Heart right ventricle (tissue), 16 donors: ENCODE measurements at regions of chr6 and their contacts with region 1.

Region 1: GRCh38 chr6:157314705-157315321 is 8.5 kb downstream of the TMEM242 start:
- DNase-seq: no peak
- ATAC-seq: peak in 7 of 8 donors; percentile 56 to 85 (median 69)
- H3K4me3 ChIP-seq: no peak overlapping the region
- H3K27ac ChIP-seq: peak overlapping the region in 3 of 10 donors; percentile 13 to 46 (median 26)
- H3K4me1 ChIP-seq: peaks cover 0 to 37% (median 24%) of the 10 kb centered on the region in 9 donors
- H3K27me3 ChIP-seq: no peaks in the 10 kb centered on the region
- CTCF ChIP-seq: peak; percentile 56 to 97 (median 85)

Region 2: GRCh38 chr6:157264701-157265100 is 50.1 kb before region 1 on chr6:
- intact Hi-C with region 1: no loop called
- DNase-seq: no peak
- ATAC-seq: no peak
- H3K4me3 ChIP-seq: no peak overlapping the region
- H3K27ac ChIP-seq: no peak overlapping the region
- H3K4me1 ChIP-seq: peaks cover 8 to 46% (median 34%) of the 10 kb centered on the region in 9 donors
- H3K27me3 ChIP-seq: no peaks in the 10 kb centered on the region
- CTCF ChIP-seq: no peak

Region 3: DNA sequence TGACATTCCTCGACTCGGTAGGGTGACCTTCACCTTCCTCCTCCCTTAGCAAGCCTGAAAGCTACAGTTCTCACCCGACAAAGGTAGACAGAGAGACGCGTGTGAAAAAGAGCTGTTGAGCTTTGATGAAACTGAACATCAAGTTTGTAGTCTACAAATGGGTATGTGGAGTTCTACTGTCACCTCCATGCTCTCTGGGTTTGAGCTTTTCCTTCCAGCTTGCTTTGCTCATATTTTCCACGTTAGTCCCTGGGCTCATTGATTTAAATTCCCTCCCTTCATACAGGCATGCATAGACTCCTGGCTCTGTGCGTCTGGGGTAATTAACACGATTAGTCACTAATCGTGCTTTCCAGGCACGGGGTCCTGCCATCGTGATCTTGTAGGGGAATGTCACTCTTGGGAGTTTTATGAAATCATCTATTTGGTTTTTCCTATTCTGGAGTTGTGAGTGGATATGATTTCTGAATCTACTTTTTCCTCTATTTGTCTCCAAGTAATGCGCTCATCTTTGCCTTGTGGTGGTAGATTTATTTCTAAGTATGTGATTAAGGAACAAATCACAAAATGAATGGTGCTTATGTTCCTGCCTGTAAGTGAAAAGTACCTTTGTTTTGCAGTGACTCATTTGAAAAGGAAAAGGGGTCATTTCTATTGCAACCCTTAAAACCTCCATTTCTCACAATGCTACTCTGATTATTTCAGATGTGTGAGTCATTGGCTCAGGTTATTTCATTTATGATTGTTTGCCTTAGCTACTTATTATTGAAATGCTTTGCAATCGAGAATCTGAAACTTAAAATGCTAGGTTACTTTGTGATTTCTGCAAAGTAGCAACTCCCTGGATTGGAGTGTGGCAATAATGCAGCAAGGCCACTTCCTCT is 220.8 kb after region 1 on chr6:
- intact Hi-C with region 1: loop called in 1 of 10 experiments (anchors 5 kb)
- DNase-seq: no peak
- ATAC-seq: peak in 3 of 8 donors; percentile 19 to 41 (median 39)
- H3K4me3 ChIP-seq: no peak overlapping the region
- H3K27ac ChIP-seq: peak overlapping the region in 3 of 10 donors; percentile 5 to 62 (median 56)
- H3K4me1 ChIP-seq: peaks cover 0 to 53% (median 44%) of the 10 kb centered on the region in 9 donors
- H3K27me3 ChIP-seq: no peaks in the 10 kb centered on the region
- CTCF ChIP-seq: no peak

Region 4: GRCh38 chr6:157597446-157598312 is 282.9 kb after region 1 on chr6:
- intact Hi-C with region 1: loop called in 9 of 10 experiments (anchors 2 to 10 kb)
- DNase-seq: peak; percentile 37 to 49
- ATAC-seq: peak; percentile 47 to 72 (median 64)
- H3K4me3 ChIP-seq: no peak overlapping the region
- H3K27ac ChIP-seq: peak overlapping the region in 1 of 10 donors; percentile 15
- H3K4me1 ChIP-seq: peaks cover 0 to 9% (median 3%) of the 10 kb centered on the region in 9 donors
- H3K27me3 ChIP-seq: no peaks in the 10 kb centered on the region
- CTCF ChIP-seq: peak in 8 of 9 donors; percentile 44 to 71 (median 57)

Region 5: DNA sequence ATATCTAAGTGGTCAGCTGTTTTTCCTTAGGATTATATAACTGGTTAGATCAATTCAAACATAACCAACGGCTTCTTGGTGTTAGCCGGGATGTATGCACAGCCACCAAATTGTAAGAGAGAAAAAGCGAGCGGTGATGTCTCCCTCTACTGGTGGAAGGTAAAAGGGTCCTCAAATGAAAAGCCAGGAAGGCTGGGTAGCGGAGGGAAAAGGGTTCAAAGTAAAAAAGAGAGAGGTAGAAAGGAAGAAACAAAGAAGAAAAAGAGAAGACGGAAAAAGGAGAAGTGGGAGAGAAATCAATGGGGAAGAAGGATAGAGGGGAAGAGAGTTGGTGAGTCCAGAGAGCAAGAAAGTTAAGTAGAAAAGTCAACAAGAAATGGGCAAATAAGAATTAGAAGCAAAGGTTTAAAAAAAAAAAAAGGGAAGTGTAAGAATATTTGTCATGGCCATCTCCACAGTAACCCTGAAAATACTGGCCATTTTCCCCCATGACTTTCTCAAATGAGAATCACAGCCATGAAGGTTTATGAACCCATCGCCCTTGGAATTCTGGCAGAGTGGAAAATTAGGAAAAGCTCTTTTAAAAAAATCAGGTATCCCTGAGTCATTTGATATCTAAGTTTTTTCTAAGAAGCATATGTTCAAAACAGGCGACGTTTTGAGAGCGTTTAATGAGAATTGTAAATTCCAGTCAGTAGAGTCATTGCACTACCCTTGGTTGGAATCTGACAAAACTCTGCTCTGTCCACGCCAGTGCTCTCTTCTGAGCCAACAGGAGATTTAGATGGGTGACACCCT is 352.6 kb after region 1 on chr6:
- intact Hi-C with region 1: loop called (anchors 2 to 10 kb)
- DNase-seq: peak in 1 of 2 donors; percentile 66
- ATAC-seq: peak in 4 of 8 donors; percentile 39 to 51 (median 44)
- H3K4me3 ChIP-seq: no peak overlapping the region
- H3K27ac ChIP-seq: no peak overlapping the region
- H3K4me1 ChIP-seq: peaks cover 5 to 37% (median 21%) of the 10 kb centered on the region in 9 donors
- H3K27me3 ChIP-seq: no peaks in the 10 kb centered on the region
- CTCF ChIP-seq: peak; percentile 74 to 95 (median 88)

Region 6: GRCh38 chr6:158060455-158061360 is 745.9 kb after region 1 on chr6:
- intact Hi-C with region 1: loop called in 1 of 10 experiments (anchors 10 kb)
- DNase-seq: peak; percentile 82
- ATAC-seq: peak; percentile 76 to 91 (median 86)
- H3K4me3 ChIP-seq: peak overlapping the region in 2 of 10 donors; percentile 13 to 23
- H3K27ac ChIP-seq: peak overlapping the region; percentile 38 to 93 (median 85)
- H3K4me1 ChIP-seq: peaks cover 14 to 52% (median 29%) of the 10 kb centered on the region in 9 donors
- H3K27me3 ChIP-seq: no peaks in the 10 kb centered on the region
- CTCF ChIP-seq: no peak